Activated naive CD4-positive, alpha-beta T cell treated with anti-CD3 and anti-CD28 coated beads for 36 hours (primary cell): ENCODE measurements at regions of chr10 and their contacts with region 1.

Region 1: DNA sequence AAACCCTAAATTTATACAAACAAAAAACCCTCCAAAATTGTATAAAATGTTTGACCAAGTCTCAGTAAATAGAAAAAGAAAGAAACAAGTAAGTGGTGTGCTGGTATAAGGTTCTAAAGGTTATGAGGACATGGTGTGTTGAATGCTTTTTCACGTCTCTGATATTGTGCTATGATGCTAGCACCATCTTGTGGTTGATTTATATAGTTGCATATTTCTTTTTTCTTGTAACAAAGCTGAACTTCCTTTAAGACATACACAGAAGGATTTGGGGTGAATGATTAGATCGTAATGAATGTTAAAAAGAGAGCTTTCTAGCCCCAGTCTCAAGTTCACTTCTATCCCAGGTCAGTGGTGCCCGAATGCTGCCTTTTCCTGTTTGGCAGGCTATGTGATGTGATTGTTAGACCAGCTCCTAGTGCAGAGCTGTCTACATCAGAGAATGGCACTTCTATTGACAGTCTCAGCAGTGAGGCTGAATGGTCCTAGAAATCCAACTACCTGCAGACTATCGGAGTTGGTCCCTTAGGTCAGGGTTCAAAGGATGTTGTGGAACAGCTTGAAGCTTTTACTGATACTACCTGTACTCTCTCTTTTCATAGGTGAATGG is 25.0 kb downstream of the VTI1A start:
- DNase-seq: no peak
- H3K4me3 Mint-ChIP-seq: no peak overlapping the region
- H3K27ac Mint-ChIP-seq: no peak overlapping the region
- H3K4me1 Mint-ChIP-seq: peaks cover 7% of the 10 kb centered on the region
- H3K27me3 Mint-ChIP-seq: no peaks in the 10 kb centered on the region

Region 2: DNA sequence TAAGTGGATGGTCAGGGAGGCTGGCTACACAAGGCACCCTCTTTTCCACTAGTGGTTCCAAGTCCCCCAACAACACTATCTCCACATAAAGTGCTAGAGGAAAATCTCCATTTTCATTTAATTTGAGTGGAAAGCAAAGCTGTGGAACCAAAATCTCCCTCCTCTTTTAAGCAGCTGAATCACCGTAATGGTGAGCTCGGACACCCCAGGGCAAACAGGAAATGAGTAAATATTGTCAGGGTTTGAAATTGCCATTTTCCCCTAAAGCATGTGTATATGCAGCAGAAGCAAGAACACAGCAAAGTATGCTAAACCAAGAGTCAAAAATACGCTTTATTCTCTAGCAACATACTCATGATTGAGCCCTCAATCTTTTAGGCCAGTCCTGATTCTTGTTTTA is 432.2 kb before region 1 on chr10:
- CTCF ChIA-PET with region 1: no interaction called
- intact Hi-C with region 1: no loop called
- DNase-seq: no peak
- H3K4me3 Mint-ChIP-seq: no peak overlapping the region
- H3K27ac Mint-ChIP-seq: no peak overlapping the region
- H3K4me1 Mint-ChIP-seq: no peaks in the 10 kb centered on the region
- H3K27me3 Mint-ChIP-seq: peaks cover 8% of the 10 kb centered on the region

Region 3: DNA sequence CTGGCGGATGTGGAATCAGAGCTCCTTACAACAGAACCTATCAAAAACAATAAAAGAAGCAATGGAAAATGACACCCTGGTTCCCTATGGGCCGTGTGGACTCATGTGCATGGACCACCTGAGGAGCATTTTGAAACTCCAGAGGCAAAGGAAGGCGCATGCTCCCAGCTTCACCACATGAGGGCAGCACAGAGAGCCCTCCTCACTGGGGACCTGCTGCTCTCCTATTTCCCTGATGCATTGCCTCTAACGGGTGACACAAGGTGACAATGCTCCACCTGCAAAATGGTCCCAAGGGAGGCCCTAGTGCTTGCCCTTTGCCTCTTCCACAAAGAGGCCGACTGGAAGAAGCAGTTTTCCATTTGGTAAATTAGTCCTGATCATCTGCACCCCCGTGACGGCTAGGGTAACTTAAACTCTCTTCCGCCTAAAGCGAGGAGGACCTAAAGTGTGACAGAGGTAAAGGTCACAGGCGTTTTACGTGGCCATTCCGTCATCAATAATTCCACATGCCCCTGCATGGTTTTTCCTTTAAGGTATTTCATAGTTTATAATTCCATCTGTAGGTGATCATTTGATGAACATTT is 356.1 kb before region 1 on chr10:
- CTCF ChIA-PET with region 1: no interaction called
- intact Hi-C with region 1: loop called (anchors 1 kb)
- DNase-seq: peak; percentile 66
- H3K4me3 Mint-ChIP-seq: no peak overlapping the region
- H3K27ac Mint-ChIP-seq: no peak overlapping the region
- H3K4me1 Mint-ChIP-seq: no peaks in the 10 kb centered on the region
- H3K27me3 Mint-ChIP-seq: no peaks in the 10 kb centered on the region

Region 4: DNA sequence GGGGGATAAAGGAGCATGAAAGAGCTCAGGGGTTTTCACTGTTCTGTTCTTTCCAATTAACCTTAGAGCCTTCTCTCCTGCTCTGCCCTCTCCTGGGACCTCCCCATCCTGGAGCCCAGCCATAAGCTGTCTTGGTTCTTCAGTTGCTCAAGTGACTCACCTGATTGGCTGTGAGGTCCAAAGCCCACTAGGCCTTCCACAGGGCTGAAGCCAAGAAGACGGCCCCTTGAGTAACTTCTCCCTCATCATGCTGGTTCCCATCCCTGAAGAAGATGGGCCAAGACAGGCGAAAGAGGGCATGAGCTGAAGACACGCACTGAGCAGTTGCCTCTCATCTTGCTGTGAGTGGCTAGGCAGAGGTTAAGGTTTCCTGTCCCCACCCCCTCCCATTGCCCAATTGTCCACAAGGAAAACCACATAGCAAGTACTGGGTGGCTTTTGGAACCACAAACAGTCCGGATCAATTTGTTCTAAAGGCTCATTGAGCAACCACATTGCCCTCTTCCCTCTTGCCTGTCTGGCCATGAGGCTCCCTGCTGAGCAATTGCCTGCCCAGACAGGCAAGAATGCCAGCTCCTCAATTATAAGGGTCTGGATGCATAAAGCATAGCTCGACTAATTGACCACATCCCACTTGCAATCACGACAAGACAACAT is 244.5 kb before region 1 on chr10:
- CTCF ChIA-PET with region 1: no interaction called
- intact Hi-C with region 1: no loop called
- DNase-seq: no peak
- H3K4me3 Mint-ChIP-seq: no peak overlapping the region
- H3K27ac Mint-ChIP-seq: no peak overlapping the region
- H3K4me1 Mint-ChIP-seq: no peaks in the 10 kb centered on the region
- H3K27me3 Mint-ChIP-seq: peaks cover 12% of the 10 kb centered on the region

Region 5: GRCh38 chr10:112314822-112315474 is 157.0 kb before region 1 on chr10:
- CTCF ChIA-PET with region 1: interaction called, 35 read pairs
- intact Hi-C with region 1: no loop called
- DNase-seq: peak; percentile 90
- H3K4me3 Mint-ChIP-seq: no peak overlapping the region
- H3K27ac Mint-ChIP-seq: no peak overlapping the region
- H3K4me1 Mint-ChIP-seq: no peaks in the 10 kb centered on the region
- H3K27me3 Mint-ChIP-seq: peaks cover 25% of the 10 kb centered on the region

Region 6: GRCh38 chr10:112446855-112447711 is 24.9 kb before region 1 on chr10 and contains the starts of genes VTI1A and ZDHHC6:
- CTCF ChIA-PET with region 1: interaction called, 12 read pairs
- intact Hi-C with region 1: loop called (anchors 1 kb)
- DNase-seq: peak; percentile 89
- H3K4me3 Mint-ChIP-seq: peak within 1 kb of the TSS; percentile 84
- H3K27ac Mint-ChIP-seq: peak within 1 kb of the TSS; percentile 86
- H3K4me1 Mint-ChIP-seq: peaks cover 57% of the 10 kb centered on the region
- H3K27me3 Mint-ChIP-seq: no peaks in the 10 kb centered on the region
- total RNA-seq, gene VTI1A: 24.9 to 28.4 TPM
- total RNA-seq, gene ZDHHC6: 37.8 to 39.0 TPM

Region 7: GRCh38 chr10:113126229-113127201 is 654.5 kb after region 1 on chr10:
- CTCF ChIA-PET with region 1: no interaction called
- intact Hi-C with region 1: loop called (anchors 1 kb)
- DNase-seq: peak; percentile 60
- H3K4me3 Mint-ChIP-seq: no peak overlapping the region
- H3K27ac Mint-ChIP-seq: no peak overlapping the region
- H3K4me1 Mint-ChIP-seq: peaks cover 4% of the 10 kb centered on the region
- H3K27me3 Mint-ChIP-seq: peaks cover 45% of the 10 kb centered on the region

Region 8: GRCh38 chr10:113521123-113521795 is 1049.3 kb after region 1 on chr10:
- CTCF ChIA-PET with region 1: no interaction called
- intact Hi-C with region 1: loop called (anchors 1 kb)
- DNase-seq: peak; percentile 58
- H3K4me3 Mint-ChIP-seq: no peak overlapping the region
- H3K27ac Mint-ChIP-seq: no peak overlapping the region
- H3K4me1 Mint-ChIP-seq: no peaks in the 10 kb centered on the region
- H3K27me3 Mint-ChIP-seq: peaks cover 8% of the 10 kb centered on the region